ENCODE measurements at regions of chr1 and their contacts with region 1.

Region 1: GRCh38 chr1:232508130-232508701 is 121.7 kb downstream of the SIPA1L2 start:
- DNase-seq: peak; percentile 14 to 87 (median 78)
- H3K4me3 ChIP-seq: peak overlapping the region in 44 of 59 donors; percentile 3 to 56 (median 28)
- H3K27ac ChIP-seq: peak overlapping the region in 50 of 59 donors; percentile 1 to 81 (median 58)
- H3K27me3 ChIP-seq: no peaks in the 10 kb centered on the region
- CTCF ChIP-seq: peak in 53 of 56 donors; percentile 28 to 74 (median 58)

Region 2: GRCh38 chr1:232435729-232436128 is 72.5 kb before region 1 on chr1:
- intact Hi-C with region 1: loop called in 1 of 2 experiments (anchors 10 kb)
- DNase-seq: no peak
- H3K4me3 ChIP-seq: no peak overlapping the region
- H3K27ac ChIP-seq: no peak overlapping the region
- H3K27me3 ChIP-seq: no peaks in the 10 kb centered on the region
- CTCF ChIP-seq: no peak

Region 3: DNA sequence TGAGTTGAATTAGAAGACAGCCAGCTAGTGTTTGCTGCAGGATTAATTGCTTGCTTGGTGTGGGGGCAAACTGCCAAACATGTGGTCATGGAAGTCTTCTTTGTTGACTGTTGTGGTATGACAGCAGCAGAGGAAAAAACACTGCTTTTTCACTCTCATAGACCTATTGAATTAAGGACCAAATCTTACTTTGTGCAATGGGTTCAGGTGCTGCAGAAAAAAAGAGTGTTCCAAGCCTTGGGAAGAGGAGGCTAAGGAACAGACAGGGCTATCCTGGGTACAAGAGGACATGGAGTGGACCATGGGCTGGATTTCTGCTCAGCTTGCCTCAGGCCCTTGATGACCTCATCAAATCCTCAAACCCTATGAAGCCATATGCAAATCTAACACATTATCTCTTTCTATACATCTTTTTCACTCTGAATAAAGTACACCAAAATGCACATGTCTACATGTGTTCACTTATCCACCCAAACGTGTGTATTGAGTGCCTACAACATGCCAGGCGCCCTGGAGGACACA is 60.2 kb after region 1 on chr1:
- intact Hi-C with region 1: loop called in 1 of 2 experiments (anchors 10 kb)
- DNase-seq: peak in 1 of 10 donors; percentile 31
- H3K4me3 ChIP-seq: no peak overlapping the region
- H3K27ac ChIP-seq: no peak overlapping the region
- H3K27me3 ChIP-seq: no peaks in the 10 kb centered on the region
- CTCF ChIP-seq: no peak

Region 4: GRCh38 chr1:232655028-232655747 is 147.0 kb after region 1 on chr1:
- intact Hi-C with region 1: no loop called
- DNase-seq: no peak
- H3K4me3 ChIP-seq: no peak overlapping the region
- H3K27ac ChIP-seq: no peak overlapping the region
- H3K27me3 ChIP-seq: peaks cover 0 to 4% (median 0%) of the 10 kb centered on the region in 45 donors
- CTCF ChIP-seq: no peak